ENCODE measurements at regions of chr1 and their contacts with region 1.

Region 1: DNA sequence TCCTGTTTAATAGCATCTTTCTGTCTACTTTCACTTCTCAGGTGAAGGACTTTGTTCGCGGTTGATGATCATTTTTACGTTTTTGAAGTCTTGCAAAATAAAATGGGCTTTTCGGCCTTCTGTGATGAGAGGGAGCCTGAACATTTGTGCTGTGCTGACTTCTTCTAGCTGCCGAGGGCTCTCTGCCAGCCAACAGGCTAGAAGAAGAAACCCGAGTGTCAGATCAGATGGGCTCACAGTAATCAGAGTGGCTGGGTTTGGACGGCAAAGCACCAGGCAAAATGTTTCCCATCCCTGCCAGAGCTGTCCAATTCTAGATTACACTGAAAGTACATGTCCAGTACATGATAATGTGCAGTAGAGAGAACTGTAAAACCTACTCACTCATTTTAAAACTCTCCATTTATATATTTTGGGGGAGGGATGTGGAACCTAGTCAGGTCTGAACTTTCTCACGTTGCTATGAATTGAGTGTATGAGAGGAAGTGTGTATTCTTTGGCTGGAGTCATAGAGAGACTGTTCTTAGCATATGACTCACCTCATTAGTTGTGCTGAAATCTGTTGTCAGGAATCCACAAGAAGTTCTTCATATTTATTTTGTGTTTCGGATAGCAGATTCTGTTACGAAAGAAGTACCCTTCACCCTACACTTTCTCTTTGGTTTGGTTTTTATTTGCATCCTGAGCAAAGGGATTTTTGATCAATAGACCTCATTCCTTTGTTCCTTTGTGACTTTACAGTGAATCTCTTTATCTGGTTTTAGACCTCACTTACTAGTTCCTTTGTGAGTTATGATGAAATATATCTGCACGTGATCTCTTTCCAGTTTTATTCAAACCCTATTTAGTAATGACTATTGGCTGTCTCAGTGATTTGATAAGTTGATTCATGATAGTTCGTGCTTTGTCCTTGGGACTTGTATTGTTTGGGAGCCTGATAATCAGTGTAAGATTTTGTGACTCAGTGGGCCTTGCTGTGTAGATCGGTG is 4.8 kb downstream of the ATP1A1 start:
- DNase-seq: peak; percentile 58
- ATAC-seq: peak; percentile 74
- H3K4me3 Mint-ChIP-seq: peak overlapping the region; percentile 93
- H3K27ac Mint-ChIP-seq: peak overlapping the region; percentile 92
- H3K4me1 Mint-ChIP-seq: peaks cover 73% of the 10 kb centered on the region
- H3K27me3 Mint-ChIP-seq: no peaks in the 10 kb centered on the region

Region 2: GRCh38 chr1:116139592-116140134 is 238.2 kb before region 1 on chr1:
- CTCF ChIA-PET with region 1: interaction called, 17 read pairs
- POLR2A ChIA-PET with region 1: no interaction called
- intact Hi-C with region 1: loop called in 1 of 2 experiments (anchors 5 kb)
- DNase-seq: no peak
- ATAC-seq: no peak
- H3K4me3 Mint-ChIP-seq: no peak overlapping the region
- H3K27ac Mint-ChIP-seq: no peak overlapping the region
- H3K4me1 Mint-ChIP-seq: peaks cover 12% of the 10 kb centered on the region
- H3K27me3 Mint-ChIP-seq: no peaks in the 10 kb centered on the region

Region 3: GRCh38 chr1:116390195-116390594 is 12.4 kb after region 1 on chr1:
- CTCF ChIA-PET with region 1: interaction called, 3 read pairs
- POLR2A ChIA-PET with region 1: no interaction called
- intact Hi-C with region 1: loop called (anchors 1 kb)
- DNase-seq: peak; percentile 71
- ATAC-seq: peak; percentile 92
- H3K4me3 Mint-ChIP-seq: no peak overlapping the region
- H3K27ac Mint-ChIP-seq: no peak overlapping the region
- H3K4me1 Mint-ChIP-seq: peaks cover 59% of the 10 kb centered on the region
- H3K27me3 Mint-ChIP-seq: no peaks in the 10 kb centered on the region

Region 4: DNA sequence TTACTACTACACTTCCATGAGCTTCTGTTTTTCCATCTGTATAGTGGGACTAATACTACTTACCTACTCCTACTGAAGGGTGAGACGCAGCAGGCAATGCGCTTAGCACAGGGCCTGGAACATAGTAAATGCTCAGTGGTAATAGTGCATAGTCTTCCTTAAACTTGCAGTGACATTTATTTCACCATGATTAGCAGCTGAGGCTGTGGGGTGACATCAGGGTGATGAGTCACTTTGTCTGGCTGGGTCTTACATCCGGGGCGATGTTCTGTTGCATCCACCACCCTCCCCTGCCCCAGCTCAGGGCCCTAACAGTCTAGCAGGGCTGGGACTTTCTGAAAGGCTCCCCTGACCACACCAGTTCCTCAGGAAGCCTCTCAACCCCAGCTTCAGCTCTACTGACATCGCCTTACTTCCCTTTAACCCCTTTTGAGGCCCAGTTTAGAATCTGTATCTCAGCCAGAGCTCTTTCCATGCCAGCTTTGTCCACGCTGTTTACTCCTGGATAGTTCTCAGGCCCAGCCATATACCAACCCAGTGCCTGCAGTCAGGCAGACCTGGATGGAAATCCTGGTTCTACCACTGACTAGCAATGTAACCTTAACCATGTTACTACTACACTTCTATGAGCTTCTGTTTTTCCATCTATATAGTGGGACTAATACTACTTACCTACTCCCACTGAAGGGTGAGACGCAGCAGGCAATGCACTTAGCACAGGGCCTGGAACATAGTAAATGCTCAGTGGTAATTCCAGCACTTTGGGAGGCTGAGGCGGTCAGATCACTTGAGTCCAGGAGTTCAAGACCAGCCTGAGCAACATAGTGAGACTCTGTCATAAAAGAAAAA is 126.7 kb after region 1 on chr1:
- CTCF ChIA-PET with region 1: interaction called, 4 read pairs
- POLR2A ChIA-PET with region 1: interaction called, 5 read pairs
- intact Hi-C with region 1: loop called (anchors 1 kb)
- DNase-seq: peak; percentile 89
- ATAC-seq: peak; percentile 86
- H3K4me3 Mint-ChIP-seq: peak overlapping the region; percentile 31
- H3K27ac Mint-ChIP-seq: peak overlapping the region; percentile 94
- H3K4me1 Mint-ChIP-seq: peaks cover 60% of the 10 kb centered on the region
- H3K27me3 Mint-ChIP-seq: no peaks in the 10 kb centered on the region

Region 5: GRCh38 chr1:116570358-116571200 is 192.7 kb after region 1 on chr1 and contains the start of gene CD58:
- CTCF ChIA-PET with region 1: no interaction called
- POLR2A ChIA-PET with region 1: no interaction called
- intact Hi-C with region 1: loop called in 1 of 2 experiments (anchors 5 kb)
- DNase-seq: peak; percentile 93
- ATAC-seq: peak; percentile 77
- H3K4me3 Mint-ChIP-seq: peak within 1 kb of the TSS; percentile 91
- H3K27ac Mint-ChIP-seq: peak within 1 kb of the TSS; percentile 87
- H3K4me1 Mint-ChIP-seq: peaks cover 64% of the 10 kb centered on the region
- H3K27me3 Mint-ChIP-seq: peaks cover 8% of the 10 kb centered on the region
- total RNA-seq, gene CD58: 12.4 to 16.0 TPM

Region 6: DNA sequence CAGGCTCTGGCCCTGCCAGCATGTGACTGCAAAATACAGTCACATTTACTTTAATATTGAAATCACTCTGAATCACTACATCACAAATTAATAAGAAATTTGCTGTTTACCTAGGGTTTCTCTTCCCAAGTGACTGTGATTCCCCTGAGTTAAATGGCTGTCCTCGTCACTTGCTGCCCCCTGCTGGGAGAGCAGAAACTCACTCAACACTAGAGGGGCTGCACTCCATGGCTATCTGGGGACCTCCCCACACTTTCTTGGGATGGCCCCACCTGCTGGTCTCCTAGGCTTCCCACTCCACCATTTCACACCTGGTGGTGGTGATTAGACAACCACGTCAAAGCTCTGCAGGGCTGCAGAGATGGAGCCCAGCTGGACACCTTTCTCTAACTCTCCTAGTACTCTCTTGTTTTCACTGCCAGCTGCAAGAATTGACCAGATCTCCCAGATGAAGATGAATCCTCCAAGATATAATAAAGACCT is 439.8 kb after region 1 on chr1:
- CTCF ChIA-PET with region 1: interaction called, 3 read pairs
- POLR2A ChIA-PET with region 1: no interaction called
- intact Hi-C with region 1: loop called in 1 of 2 experiments (anchors 5 kb)
- DNase-seq: peak; percentile 88
- ATAC-seq: peak; percentile 65
- H3K4me3 Mint-ChIP-seq: peak overlapping the region; percentile 44
- H3K27ac Mint-ChIP-seq: peak overlapping the region; percentile 91
- H3K4me1 Mint-ChIP-seq: peaks cover 59% of the 10 kb centered on the region
- H3K27me3 Mint-ChIP-seq: no peaks in the 10 kb centered on the region

Region 7: GRCh38 chr1:117605774-117606648 is 1228.2 kb after region 1 on chr1 and contains the start of gene TENT5C:
- CTCF ChIA-PET with region 1: no interaction called
- POLR2A ChIA-PET with region 1: no interaction called
- intact Hi-C with region 1: loop called in 1 of 2 experiments (anchors 5 kb)
- DNase-seq: peak; percentile 98
- ATAC-seq: peak; percentile 96
- H3K4me3 Mint-ChIP-seq: peak within 1 kb of the TSS; percentile 92
- H3K27ac Mint-ChIP-seq: peak within 1 kb of the TSS; percentile 86
- H3K4me1 Mint-ChIP-seq: peaks cover 37% of the 10 kb centered on the region
- H3K27me3 Mint-ChIP-seq: peaks cover 2% of the 10 kb centered on the region
- total RNA-seq, gene TENT5C: 6.0 to 6.4 TPM